A673 (cell line): ENCODE measurements at regions of chr9 and their contacts with region 1.

Region 1: GRCh38 chr9:7536310-7536939 is 263.2 kb downstream of the DMAC1 start:
- DNase-seq: peak; percentile 70
- H3K4me3 ChIP-seq: no peak overlapping the region
- H3K27ac ChIP-seq: no peak overlapping the region
- H3K4me1 ChIP-seq: no peaks in the 10 kb centered on the region
- H3K27me3 ChIP-seq: no peaks in the 10 kb centered on the region
- CTCF ChIP-seq: peak; percentile 81

Region 2: GRCh38 chr9:6907772-6908381 is 628.5 kb before region 1 on chr9:
- CTCF ChIA-PET with region 1: no interaction called
- POLR2A ChIA-PET with region 1: no interaction called
- intact Hi-C with region 1: loop called (anchors 2 kb)
- DNase-seq: peak; percentile 45
- H3K4me3 ChIP-seq: no peak overlapping the region
- H3K27ac ChIP-seq: no peak overlapping the region
- H3K4me1 ChIP-seq: no peaks in the 10 kb centered on the region
- H3K27me3 ChIP-seq: no peaks in the 10 kb centered on the region
- CTCF ChIP-seq: peak; percentile 79

Region 3: DNA sequence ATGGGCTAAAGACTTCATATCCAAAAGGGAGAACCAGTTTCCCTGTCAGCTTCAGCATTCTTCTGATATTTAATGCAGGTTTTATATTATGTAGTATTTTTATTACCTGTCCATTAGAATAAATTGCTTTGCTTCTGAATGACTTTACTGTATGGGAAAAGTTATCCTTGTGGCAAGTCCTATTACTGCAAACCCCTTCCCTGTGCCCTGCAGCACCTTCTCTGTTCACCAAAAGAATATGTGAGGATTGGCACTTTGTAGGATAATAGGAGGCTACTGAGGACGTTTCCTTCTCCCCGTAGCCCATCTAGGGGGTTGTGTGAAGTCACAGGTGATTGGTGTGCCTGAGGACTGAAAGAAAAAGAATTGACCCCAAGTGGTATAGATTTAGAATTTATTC is 482.5 kb before region 1 on chr9:
- CTCF ChIA-PET with region 1: interaction called, 3 read pairs
- POLR2A ChIA-PET with region 1: no interaction called
- intact Hi-C with region 1: loop called (anchors 5 kb)
- DNase-seq: no peak
- H3K4me3 ChIP-seq: no peak overlapping the region
- H3K27ac ChIP-seq: no peak overlapping the region
- H3K4me1 ChIP-seq: peaks cover 3% of the 10 kb centered on the region
- H3K27me3 ChIP-seq: no peaks in the 10 kb centered on the region
- CTCF ChIP-seq: no peak; the same call in 1 of the 2 replicates

Region 4: GRCh38 chr9:7172154-7173125 is 364.0 kb before region 1 on chr9:
- CTCF ChIA-PET with region 1: no interaction called
- POLR2A ChIA-PET with region 1: no interaction called
- intact Hi-C with region 1: loop called (anchors 5 kb)
- DNase-seq: no peak
- H3K4me3 ChIP-seq: no peak overlapping the region
- H3K27ac ChIP-seq: no peak overlapping the region
- H3K4me1 ChIP-seq: no peaks in the 10 kb centered on the region
- H3K27me3 ChIP-seq: no peaks in the 10 kb centered on the region
- CTCF ChIP-seq: no peak

Region 5: GRCh38 chr9:7273391-7273974 is 262.9 kb before region 1 on chr9:
- CTCF ChIA-PET with region 1: no interaction called
- POLR2A ChIA-PET with region 1: no interaction called
- intact Hi-C with region 1: loop called (anchors 5 kb)
- DNase-seq: peak; percentile 27
- H3K4me3 ChIP-seq: no peak overlapping the region
- H3K27ac ChIP-seq: no peak overlapping the region
- H3K4me1 ChIP-seq: no peaks in the 10 kb centered on the region
- H3K27me3 ChIP-seq: peaks cover 31% of the 10 kb centered on the region
- CTCF ChIP-seq: peak; percentile 51

Region 6: DNA sequence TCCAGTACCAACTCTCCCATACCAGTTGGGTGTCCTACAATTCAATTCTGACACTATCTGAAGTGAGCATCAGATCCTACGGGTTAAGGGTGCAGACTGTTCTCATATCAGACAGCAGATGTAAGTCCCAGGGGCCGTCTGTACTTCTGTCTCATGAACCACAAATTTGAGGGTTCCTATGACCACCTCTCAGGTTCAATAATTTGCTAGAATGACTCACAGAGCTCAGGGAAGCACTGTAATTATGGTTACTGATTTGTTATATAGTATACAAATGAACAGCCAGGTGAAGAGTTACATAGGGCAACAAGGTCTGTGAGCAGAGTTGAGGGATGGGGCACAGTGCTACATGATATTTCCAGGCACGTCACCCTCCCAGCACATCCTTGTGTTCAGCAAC is 235.9 kb before region 1 on chr9:
- CTCF ChIA-PET with region 1: no interaction called
- POLR2A ChIA-PET with region 1: no interaction called
- intact Hi-C with region 1: no loop called
- DNase-seq: no peak
- H3K4me3 ChIP-seq: no peak overlapping the region
- H3K27ac ChIP-seq: no peak overlapping the region
- H3K4me1 ChIP-seq: no peaks in the 10 kb centered on the region
- H3K27me3 ChIP-seq: peaks cover 6% of the 10 kb centered on the region
- CTCF ChIP-seq: no peak

Region 7: GRCh38 chr9:7342229-7342628 is 194.2 kb before region 1 on chr9:
- CTCF ChIA-PET with region 1: no interaction called
- POLR2A ChIA-PET with region 1: no interaction called
- intact Hi-C with region 1: loop called (anchors 10 kb)
- DNase-seq: no peak
- H3K4me3 ChIP-seq: no peak overlapping the region
- H3K27ac ChIP-seq: no peak overlapping the region
- H3K4me1 ChIP-seq: peaks cover 5% of the 10 kb centered on the region
- H3K27me3 ChIP-seq: no peaks in the 10 kb centered on the region
- CTCF ChIP-seq: peak; percentile 39

Region 8: GRCh38 chr9:7405924-7406604 is 130.4 kb before region 1 on chr9:
- CTCF ChIA-PET with region 1: interaction called, 9 read pairs
- POLR2A ChIA-PET with region 1: no interaction called
- intact Hi-C with region 1: loop called (anchors 1 kb)
- DNase-seq: no peak
- H3K4me3 ChIP-seq: no peak overlapping the region
- H3K27ac ChIP-seq: no peak overlapping the region
- H3K4me1 ChIP-seq: no peaks in the 10 kb centered on the region
- H3K27me3 ChIP-seq: no peaks in the 10 kb centered on the region
- CTCF ChIP-seq: no peak

Region 9: DNA sequence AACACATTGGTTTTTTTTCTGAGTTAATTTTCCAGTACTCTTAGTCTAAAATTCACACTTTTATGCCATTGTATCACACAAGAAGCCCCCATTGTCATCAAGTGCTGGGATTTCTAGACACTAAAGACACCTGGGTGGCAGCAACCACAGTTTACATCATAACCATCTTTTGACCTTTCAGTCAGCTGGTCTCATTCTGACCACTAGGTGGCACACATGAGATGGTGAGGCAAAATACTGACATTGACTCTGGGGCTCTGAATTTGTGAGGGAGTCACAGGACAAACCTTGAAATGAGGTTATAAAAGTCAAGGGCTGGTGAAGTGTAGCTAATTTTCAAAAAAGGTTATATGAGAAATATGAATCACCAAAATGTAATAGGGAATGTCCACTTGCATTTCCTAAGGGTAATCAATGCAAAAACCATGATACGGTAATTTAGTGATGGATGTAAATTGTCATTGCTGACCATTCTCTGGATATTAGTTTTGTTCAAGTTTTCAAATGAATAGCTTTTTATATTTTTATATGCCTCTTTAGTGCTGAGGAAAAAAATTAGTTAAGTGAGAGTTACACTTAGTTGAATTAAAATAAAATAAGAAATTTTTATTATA is 33.8 kb after region 1 on chr9:
- CTCF ChIA-PET with region 1: no interaction called
- POLR2A ChIA-PET with region 1: no interaction called
- intact Hi-C with region 1: no loop called
- DNase-seq: peak; percentile 63
- H3K4me3 ChIP-seq: no peak overlapping the region
- H3K27ac ChIP-seq: no peak overlapping the region
- H3K4me1 ChIP-seq: no peaks in the 10 kb centered on the region
- H3K27me3 ChIP-seq: peaks cover 25% of the 10 kb centered on the region
- CTCF ChIP-seq: peak; percentile 95